Activated CD8-positive, alpha-beta T cell treated with anti-CD3 and anti-CD28 coated beads for 36 hours (primary cell): ENCODE measurements at regions of chr11 and their contacts with region 1.

Region 1: DNA sequence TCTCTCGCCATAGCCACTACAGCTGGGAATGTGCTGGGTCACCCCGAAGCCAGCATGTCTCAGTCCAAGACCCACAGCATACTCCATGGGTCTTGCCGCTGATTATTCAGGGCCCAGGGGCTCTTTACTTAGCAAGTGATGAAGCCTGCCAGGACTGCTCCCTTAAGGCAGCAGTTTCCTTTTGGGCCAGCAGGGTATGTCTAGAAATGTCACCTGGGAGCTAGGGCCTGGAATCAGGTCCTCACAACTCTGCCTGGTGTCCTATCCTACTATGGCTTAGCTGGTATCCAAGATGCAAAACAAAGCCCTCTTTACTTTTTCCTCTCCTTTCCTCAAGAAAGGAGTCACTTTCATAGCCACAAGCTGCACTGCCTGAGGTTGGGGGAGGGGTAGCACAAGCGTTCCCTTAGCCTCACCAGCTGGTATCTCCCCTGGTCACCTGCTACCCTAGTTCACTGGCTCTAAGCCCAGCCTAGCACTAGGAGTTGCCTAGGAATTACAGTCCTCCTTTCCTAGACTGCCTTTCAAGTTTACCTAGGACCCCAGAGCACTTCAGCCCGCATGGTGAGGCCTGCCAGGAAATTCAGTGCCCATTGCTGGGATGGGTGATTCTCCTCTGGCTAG is 22.6 kb upstream of the NCR3LG1 start:
- DNase-seq: no peak
- ATAC-seq: no peak
- H3K4me3 Mint-ChIP-seq: no peak overlapping the region
- H3K27ac Mint-ChIP-seq: no peak overlapping the region
- H3K4me1 Mint-ChIP-seq: peaks cover 22% of the 10 kb centered on the region
- H3K27me3 Mint-ChIP-seq: no peaks in the 10 kb centered on the region
- CTCF ChIP-seq: no peak

Region 2: GRCh38 chr11:17036666-17037542 is 292.1 kb before region 1 on chr11:
- CTCF ChIA-PET with region 1: no interaction called
- POLR2A ChIA-PET with region 1: no interaction called
- intact Hi-C with region 1: no loop called
- DNase-seq: peak; percentile 31
- ATAC-seq: no peak
- H3K4me3 Mint-ChIP-seq: no peak overlapping the region
- H3K27ac Mint-ChIP-seq: no peak overlapping the region
- H3K4me1 Mint-ChIP-seq: no peaks in the 10 kb centered on the region
- H3K27me3 Mint-ChIP-seq: no peaks in the 10 kb centered on the region
- CTCF ChIP-seq: no peak

Region 3: DNA sequence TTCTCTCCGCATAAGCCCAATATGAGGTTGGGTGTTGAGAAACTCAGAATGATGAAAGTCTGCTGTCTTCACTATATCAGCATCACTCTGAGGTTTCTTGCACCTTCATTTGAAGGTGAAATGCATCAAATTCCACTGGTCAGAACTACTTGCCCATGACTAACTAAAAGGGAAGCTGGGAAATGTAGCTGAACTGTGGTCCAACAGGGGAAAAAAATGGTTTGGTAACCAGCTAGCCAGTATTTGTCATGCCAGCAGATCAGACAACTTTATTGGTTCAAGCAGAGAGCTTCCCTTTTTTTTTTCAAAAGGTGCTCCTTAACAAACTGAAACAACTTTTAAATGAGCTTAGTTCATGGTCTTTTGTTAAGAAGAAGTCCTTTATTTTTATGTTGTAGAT is 107.0 kb before region 1 on chr11:
- CTCF ChIA-PET with region 1: no interaction called
- POLR2A ChIA-PET with region 1: no interaction called
- intact Hi-C with region 1: no loop called
- DNase-seq: no peak
- ATAC-seq: no peak
- H3K4me3 Mint-ChIP-seq: no peak overlapping the region
- H3K27ac Mint-ChIP-seq: no peak overlapping the region
- H3K4me1 Mint-ChIP-seq: no peaks in the 10 kb centered on the region
- H3K27me3 Mint-ChIP-seq: no peaks in the 10 kb centered on the region
- CTCF ChIP-seq: no peak

Region 4: DNA sequence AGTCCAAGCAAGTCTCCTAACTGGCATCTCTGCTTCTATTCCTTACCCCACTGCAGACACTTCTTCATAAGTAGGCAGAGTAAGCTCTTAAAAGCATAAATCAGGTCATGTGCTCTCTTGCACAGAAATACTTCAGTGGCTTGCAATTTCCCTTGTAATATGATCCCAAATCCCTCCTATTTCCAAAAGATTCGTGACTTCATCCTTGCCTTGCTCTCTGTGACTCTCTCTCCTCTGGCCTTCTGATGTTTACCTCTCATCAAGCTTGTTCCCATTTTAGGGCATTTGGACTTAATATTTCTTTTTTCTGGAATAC is 14.8 kb before region 1 on chr11:
- CTCF ChIA-PET with region 1: interaction called, 10 read pairs
- POLR2A ChIA-PET with region 1: interaction called, 3 read pairs
- intact Hi-C with region 1: no loop called
- DNase-seq: no peak
- ATAC-seq: no peak
- H3K4me3 Mint-ChIP-seq: no peak overlapping the region
- H3K27ac Mint-ChIP-seq: no peak overlapping the region
- H3K4me1 Mint-ChIP-seq: no peaks in the 10 kb centered on the region
- H3K27me3 Mint-ChIP-seq: no peaks in the 10 kb centered on the region
- CTCF ChIP-seq: no peak